PC-3 (cell line): ENCODE measurements at regions of chr18 and their contacts with region 1.

Region 1: DNA sequence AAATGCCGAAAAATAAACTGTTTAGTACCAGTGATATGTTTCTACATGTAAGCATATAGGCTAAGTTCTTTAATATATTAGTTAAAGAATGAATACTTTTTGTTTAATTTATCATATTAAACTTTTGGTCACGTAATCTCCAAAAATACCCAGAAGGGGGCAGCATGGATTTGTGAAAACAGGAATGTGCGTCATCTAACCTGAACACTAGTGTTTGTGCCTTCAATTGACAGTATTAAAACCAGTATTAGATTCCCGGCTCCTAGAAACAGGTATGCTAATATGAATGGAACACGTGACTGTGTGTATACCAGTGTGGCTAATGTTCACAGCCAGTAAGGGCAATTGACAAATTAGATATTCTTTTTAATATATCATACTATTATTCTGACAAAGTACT is 51.8 kb downstream of the WDR7 start:
- DNase-seq: peak; percentile 76
- ATAC-seq: peak; percentile 64
- H3K4me3 ChIP-seq: no peak overlapping the region
- H3K27ac ChIP-seq: no peak overlapping the region
- H3K4me1 ChIP-seq: no peaks in the 10 kb centered on the region
- H3K27me3 ChIP-seq: no peaks in the 10 kb centered on the region
- CTCF ChIP-seq: peak; percentile 63

Region 2: DNA sequence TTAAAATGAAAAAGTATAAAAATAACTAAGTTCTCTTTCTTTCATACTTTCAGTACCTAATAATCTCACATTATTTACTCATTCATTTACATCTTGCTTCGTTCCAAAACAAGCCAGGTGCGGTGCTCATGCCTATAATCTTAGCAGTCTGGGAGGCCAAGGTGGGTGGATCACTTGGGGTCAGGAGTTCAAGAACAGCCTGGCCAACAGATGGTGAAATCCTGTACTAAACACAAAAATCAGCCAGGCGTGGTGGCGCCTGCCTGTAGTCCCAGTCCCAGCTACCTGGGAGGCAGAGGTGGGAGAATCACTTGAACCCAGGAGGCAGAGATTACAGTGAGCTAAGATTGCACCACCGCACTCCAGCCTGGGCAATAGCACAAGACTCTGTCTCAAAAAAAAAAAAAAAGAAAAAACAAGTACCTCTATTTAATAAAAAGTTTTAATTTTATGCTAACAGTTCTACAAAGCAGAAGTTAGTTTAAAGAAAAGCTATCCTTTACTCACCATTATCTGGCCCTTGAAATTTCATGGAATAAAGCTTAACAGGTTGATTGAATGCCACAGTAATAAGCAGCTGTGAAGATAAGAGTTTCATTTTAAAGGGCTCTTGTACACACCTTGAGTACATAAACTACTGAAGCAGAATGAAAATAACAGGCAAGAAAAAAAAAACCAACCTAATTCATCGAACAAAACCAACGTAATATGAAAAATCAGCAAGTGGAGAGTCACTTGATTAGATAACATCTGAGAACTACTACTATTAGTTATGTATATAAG is 87.0 kb before region 1 on chr18:
- CTCF ChIA-PET with region 1: no interaction called
- POLR2A ChIA-PET with region 1: no interaction called
- intact Hi-C with region 1: no loop called
- DNase-seq: no peak
- ATAC-seq: no peak
- H3K4me3 ChIP-seq: no peak overlapping the region
- H3K27ac ChIP-seq: no peak overlapping the region
- H3K4me1 ChIP-seq: no peaks in the 10 kb centered on the region
- H3K27me3 ChIP-seq: no peaks in the 10 kb centered on the region
- CTCF ChIP-seq: no peak

Region 3: GRCh38 chr18:56645415-56646016 is 57.4 kb before region 1 on chr18:
- CTCF ChIA-PET with region 1: no interaction called
- POLR2A ChIA-PET with region 1: no interaction called
- intact Hi-C with region 1: loop called (anchors 2 kb)
- DNase-seq: peak; percentile 45
- ATAC-seq: peak; percentile 21; the same call in 1 of the 2 replicates
- H3K4me3 ChIP-seq: no peak overlapping the region
- H3K27ac ChIP-seq: no peak overlapping the region
- H3K4me1 ChIP-seq: peaks cover 15% of the 10 kb centered on the region
- H3K27me3 ChIP-seq: no peaks in the 10 kb centered on the region
- CTCF ChIP-seq: peak; percentile 69

Region 4: GRCh38 chr18:56743115-56743514 is 40.2 kb after region 1 on chr18:
- CTCF ChIA-PET with region 1: no interaction called
- POLR2A ChIA-PET with region 1: no interaction called
- intact Hi-C with region 1: loop called (anchors 5 kb)
- DNase-seq: no peak
- ATAC-seq: no peak
- H3K4me3 ChIP-seq: no peak overlapping the region
- H3K27ac ChIP-seq: no peak overlapping the region
- H3K4me1 ChIP-seq: no peaks in the 10 kb centered on the region
- H3K27me3 ChIP-seq: no peaks in the 10 kb centered on the region
- CTCF ChIP-seq: no peak

Region 5: GRCh38 chr18:57258131-57258777 is 555.3 kb after region 1 on chr18:
- CTCF ChIA-PET with region 1: no interaction called
- POLR2A ChIA-PET with region 1: no interaction called
- intact Hi-C with region 1: no loop called
- DNase-seq: no peak
- ATAC-seq: no peak
- H3K4me3 ChIP-seq: no peak overlapping the region
- H3K27ac ChIP-seq: no peak overlapping the region
- H3K4me1 ChIP-seq: no peaks in the 10 kb centered on the region
- H3K27me3 ChIP-seq: peaks cover 29% of the 10 kb centered on the region
- CTCF ChIP-seq: no peak